CD4-positive, alpha-beta T cell (primary cell): ENCODE measurements at regions of chr19 and their contacts with region 1.

Region 1: GRCh38 chr19:58519355-58520256 is at the start of gene ZBTB45:
- DNase-seq: peak; percentile 77 to 96 (median 84)
- ATAC-seq: peak; percentile 78
- H3K4me3 ChIP-seq: peak within 1 kb of the TSS; percentile 86
- H3K4me3 Mint-ChIP-seq: peak within 1 kb of the TSS; percentile 99
- H3K27ac ChIP-seq: peak within 1 kb of the TSS; percentile 87 to 95
- H3K27ac Mint-ChIP-seq: peak within 1 kb of the TSS; percentile 98
- H3K4me1 ChIP-seq: peaks cover 51% of the 10 kb centered on the region
- H3K4me1 Mint-ChIP-seq: peaks cover 43% of the 10 kb centered on the region
- H3K27me3 ChIP-seq: no peaks in the 10 kb centered on the region
- H3K27me3 Mint-ChIP-seq: no peaks in the 10 kb centered on the region
- CTCF ChIP-seq: peak; percentile 82
- total RNA-seq, gene ZBTB45: 5.7 to 6.3 TPM

Region 2: DNA sequence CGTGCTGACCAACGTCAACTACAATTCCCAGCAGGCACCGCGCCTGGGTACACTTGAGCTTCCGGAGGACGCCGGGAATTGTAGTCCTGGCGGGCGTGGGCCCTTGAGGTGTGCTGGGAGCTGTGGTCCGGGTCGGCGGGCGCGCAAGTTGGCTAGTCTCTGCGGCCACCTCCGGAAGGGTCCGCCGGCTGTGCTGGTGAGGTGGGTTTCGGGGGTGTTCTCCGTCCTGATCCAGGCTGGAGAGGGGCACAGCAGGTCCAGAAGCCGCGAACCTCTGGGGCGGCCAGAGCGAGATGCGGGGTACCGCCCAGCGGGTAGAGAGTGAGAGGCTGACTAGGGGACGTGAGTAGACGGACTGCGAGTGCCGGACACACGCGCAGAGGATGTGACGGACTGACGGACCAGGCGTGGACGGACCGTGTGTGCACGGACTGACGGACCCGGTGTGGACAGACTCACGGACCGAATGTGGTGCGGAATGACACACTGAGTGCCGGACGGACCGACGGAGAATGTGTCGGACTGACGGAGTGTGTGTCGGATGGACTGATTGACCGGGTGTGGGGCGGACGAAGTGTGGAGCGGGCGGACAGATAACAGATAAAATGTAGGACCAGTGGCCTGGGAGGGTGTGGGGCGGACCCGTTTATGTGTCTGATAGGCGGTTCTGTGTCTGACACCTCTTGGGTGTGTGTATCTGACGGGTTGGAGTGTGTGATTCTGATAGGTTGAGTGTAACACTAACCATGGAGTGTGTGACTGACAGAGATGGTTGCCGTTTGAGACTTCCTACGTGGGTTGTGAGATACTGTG is 192.5 kb before region 1 on chr19 and contains the start of gene ZSCAN22:
- CTCF ChIA-PET with region 1: interaction called, 4 read pairs
- POLR2A ChIA-PET with region 1: interaction called, 3 read pairs
- intact Hi-C with region 1: loop called in 1 of 2 experiments (anchors 5 kb)
- DNase-seq: peak; percentile 76 to 94 (median 86)
- ATAC-seq: peak; percentile 88
- H3K4me3 ChIP-seq: peak within 1 kb of the TSS; percentile 86
- H3K4me3 Mint-ChIP-seq: no peak within 1 kb of the TSS
- H3K27ac ChIP-seq: peak within 1 kb of the TSS; percentile 65
- H3K27ac Mint-ChIP-seq: no peak within 1 kb of the TSS
- H3K4me1 ChIP-seq: peaks cover 22% of the 10 kb centered on the region
- H3K4me1 Mint-ChIP-seq: peaks cover 4% of the 10 kb centered on the region
- H3K27me3 ChIP-seq: no peaks in the 10 kb centered on the region
- H3K27me3 Mint-ChIP-seq: no peaks in the 10 kb centered on the region
- CTCF ChIP-seq: no peak
- total RNA-seq, gene ZSCAN22: 0.77 to 0.81 TPM

Region 3: DNA sequence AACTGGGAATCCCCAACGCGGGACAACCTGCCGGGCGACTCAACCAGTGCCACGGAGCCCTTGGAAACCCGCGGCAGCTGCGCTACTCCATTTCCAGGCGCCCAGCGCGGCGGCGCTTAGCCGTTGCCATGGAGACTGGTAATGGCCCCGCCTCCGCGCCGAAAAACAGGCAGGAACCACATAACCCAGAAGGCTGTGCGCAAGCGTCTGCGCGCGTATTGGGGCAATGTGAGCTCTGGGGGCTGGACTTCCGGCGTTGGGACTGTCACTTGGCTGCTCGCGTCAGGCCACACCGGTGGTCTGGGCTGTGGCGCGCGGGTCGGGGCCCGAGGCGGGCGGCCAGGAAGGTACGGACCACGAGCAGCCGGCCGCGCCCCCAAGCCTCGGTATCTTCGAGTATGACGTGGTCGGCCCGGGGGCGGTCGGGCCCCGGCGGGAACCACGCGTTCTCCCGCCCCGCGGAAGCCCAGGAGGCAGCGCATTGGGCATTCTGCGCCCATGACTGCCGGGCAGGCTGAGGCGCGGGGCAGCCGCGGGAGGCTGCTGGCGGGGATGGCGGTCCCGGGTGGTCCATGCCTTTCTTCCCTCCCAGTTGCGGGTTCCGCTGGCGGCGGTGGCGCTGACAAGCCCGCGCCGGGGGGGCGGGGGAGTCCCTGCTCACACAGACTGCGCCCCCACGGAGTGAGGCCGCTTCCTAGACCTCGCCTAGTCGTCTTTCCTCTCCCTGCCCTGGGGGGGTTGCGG is 68.1 kb before region 1 on chr19 and contains the start of gene ZNF324B:
- CTCF ChIA-PET with region 1: interaction called, 10 read pairs
- POLR2A ChIA-PET with region 1: no interaction called
- intact Hi-C with region 1: no loop called
- DNase-seq: peak; percentile 92 to 98 (median 96)
- ATAC-seq: peak; percentile 97
- H3K4me3 ChIP-seq: peak within 1 kb of the TSS; percentile 66
- H3K4me3 Mint-ChIP-seq: peak within 1 kb of the TSS; percentile 85
- H3K27ac ChIP-seq: peak within 1 kb of the TSS in 1 of 2 donors; percentile 61
- H3K27ac Mint-ChIP-seq: peak within 1 kb of the TSS; percentile 63
- H3K4me1 ChIP-seq: peaks cover 15% of the 10 kb centered on the region
- H3K4me1 Mint-ChIP-seq: peaks cover 21% of the 10 kb centered on the region
- H3K27me3 ChIP-seq: peaks cover 9 to 16% of the 10 kb centered on the region in 2 experiments
- H3K27me3 Mint-ChIP-seq: peaks cover 28% of the 10 kb centered on the region
- CTCF ChIP-seq: no peak
- total RNA-seq, gene ZNF324B: 6.3 to 7.6 TPM

Region 4: DNA sequence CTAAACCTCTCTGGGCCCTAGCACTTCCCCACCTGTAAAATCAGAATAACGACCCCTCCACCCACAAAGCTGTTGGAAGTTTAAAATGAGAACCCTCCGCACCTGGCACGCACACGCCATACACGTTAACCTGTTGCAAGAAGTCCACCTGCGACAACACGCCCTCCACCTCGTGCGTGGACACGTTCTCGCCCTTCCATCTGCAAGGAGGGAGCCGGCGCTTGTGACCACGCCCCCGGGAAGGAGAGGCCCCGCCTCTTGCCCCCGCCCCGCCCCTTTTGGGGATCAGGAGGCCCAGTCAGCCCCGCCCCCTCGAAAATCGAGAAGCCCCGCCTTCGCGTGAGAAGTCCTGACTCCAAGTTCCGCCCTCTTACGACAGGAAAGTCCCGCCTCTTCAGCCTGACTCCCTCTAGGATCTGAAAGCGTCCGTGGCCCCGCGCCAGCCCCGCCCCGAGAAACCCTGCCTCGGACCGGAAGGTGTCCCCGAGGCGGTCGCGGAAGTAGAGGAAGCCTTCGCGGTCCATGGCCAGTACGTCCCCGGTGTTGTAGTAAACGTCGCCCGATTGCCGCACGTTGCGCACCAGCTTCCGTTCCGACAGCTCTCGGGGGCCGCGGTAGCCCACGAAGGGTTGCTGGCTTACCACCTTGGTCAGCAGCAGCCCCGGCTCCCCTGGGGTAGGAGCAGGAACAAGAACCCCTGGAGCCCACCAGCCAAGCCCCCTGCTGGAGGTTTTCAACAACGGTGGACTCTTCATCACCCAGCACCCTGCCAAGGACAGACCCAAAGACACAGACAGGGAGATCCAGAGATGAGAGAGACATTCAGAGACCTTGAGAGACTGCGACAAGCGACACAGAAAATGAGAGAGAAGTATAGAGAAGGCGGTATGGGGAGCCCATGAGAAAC is 20.3 kb before region 1 on chr19:
- CTCF ChIA-PET with region 1: interaction called, 8 read pairs
- POLR2A ChIA-PET with region 1: interaction called, 15 read pairs
- intact Hi-C with region 1: no loop called
- DNase-seq: peak; percentile 85 to 98 (median 92)
- ATAC-seq: peak; percentile 83
- H3K4me3 ChIP-seq: peak overlapping the region; percentile 57
- H3K4me3 Mint-ChIP-seq: peak overlapping the region; percentile 94
- H3K27ac ChIP-seq: peak overlapping the region; percentile 57 to 79
- H3K27ac Mint-ChIP-seq: peak overlapping the region; percentile 86
- H3K4me1 ChIP-seq: peaks cover 25% of the 10 kb centered on the region
- H3K4me1 Mint-ChIP-seq: peaks cover 16% of the 10 kb centered on the region
- H3K27me3 ChIP-seq: no peaks in the 10 kb centered on the region
- H3K27me3 Mint-ChIP-seq: no peaks in the 10 kb centered on the region
- CTCF ChIP-seq: no peak

Region 5: GRCh38 chr19:58543826-58544590 is 24.4 kb after region 1 on chr19 and contains the start of gene TRIM28:
- CTCF ChIA-PET with region 1: interaction called, 34 read pairs
- POLR2A ChIA-PET with region 1: interaction called, 56 read pairs
- intact Hi-C with region 1: loop called (anchors 1 kb)
- DNase-seq: peak; percentile 99 to 100 (median 100)
- ATAC-seq: peak; percentile 87
- H3K4me3 ChIP-seq: peak within 1 kb of the TSS; percentile 70
- H3K4me3 Mint-ChIP-seq: peak within 1 kb of the TSS; percentile 95
- H3K27ac ChIP-seq: peak within 1 kb of the TSS; percentile 79 to 88
- H3K27ac Mint-ChIP-seq: peak within 1 kb of the TSS; percentile 95
- H3K4me1 ChIP-seq: peaks cover 41% of the 10 kb centered on the region
- H3K4me1 Mint-ChIP-seq: peaks cover 40% of the 10 kb centered on the region
- H3K27me3 ChIP-seq: no peaks in the 10 kb centered on the region
- H3K27me3 Mint-ChIP-seq: no peaks in the 10 kb centered on the region
- CTCF ChIP-seq: no peak
- total RNA-seq, gene TRIM28: 549 to 553 TPM

Region 6: DNA sequence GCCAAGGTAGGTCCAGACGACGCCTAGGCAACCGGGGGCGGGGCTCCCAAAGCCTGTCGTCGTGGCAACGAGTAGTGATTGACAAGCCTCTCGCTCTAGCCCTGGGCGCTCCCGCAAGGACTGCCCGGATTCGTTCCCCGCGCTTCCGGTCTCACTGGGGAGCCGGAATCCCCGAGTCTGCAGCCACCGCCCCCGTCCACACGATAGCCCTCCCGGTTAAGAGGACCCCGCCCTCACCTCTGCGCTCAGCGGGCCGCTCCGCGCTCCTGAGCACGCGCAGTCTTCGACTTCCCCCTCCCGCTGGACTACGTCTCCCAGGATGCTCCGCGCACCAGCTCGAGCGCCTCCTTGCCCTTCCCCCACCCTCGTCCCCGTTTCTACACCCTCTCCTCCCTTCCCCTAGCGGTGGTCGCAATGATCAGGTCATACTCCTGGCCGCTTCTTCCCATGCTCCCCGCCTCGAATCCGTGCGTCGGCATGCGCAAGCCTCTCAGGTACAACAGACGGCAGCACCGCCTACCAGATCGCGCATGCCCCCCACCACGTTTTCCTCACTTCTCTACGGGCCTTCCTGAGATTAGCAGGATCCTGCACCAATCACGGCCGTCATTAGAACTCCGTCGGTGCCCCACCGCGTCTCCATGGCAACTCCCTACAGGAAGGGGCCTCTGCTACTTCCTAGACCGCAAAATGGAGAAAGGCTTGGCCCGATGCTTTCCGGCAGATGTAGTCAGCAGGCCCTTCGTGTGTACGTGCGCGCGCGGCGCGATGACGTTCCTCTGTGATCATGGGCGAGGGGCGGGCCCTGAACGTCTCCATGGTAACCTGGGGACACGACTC is 53.4 kb after region 1 on chr19 and contains the start of gene MZF1:
- CTCF ChIA-PET with region 1: interaction called, 22 read pairs
- POLR2A ChIA-PET with region 1: interaction called, 27 read pairs
- intact Hi-C with region 1: loop called (anchors 2 kb)
- DNase-seq: peak; percentile 98 to 100 (median 100)
- ATAC-seq: peak; percentile 72
- H3K4me3 ChIP-seq: peak within 1 kb of the TSS; percentile 84
- H3K4me3 Mint-ChIP-seq: peak within 1 kb of the TSS; percentile 92
- H3K27ac ChIP-seq: peak within 1 kb of the TSS; percentile 100
- H3K27ac Mint-ChIP-seq: peak within 1 kb of the TSS; percentile 96
- H3K4me1 ChIP-seq: peaks cover 49% of the 10 kb centered on the region
- H3K4me1 Mint-ChIP-seq: peaks cover 36% of the 10 kb centered on the region
- H3K27me3 ChIP-seq: no peaks in the 10 kb centered on the region
- H3K27me3 Mint-ChIP-seq: no peaks in the 10 kb centered on the region
- CTCF ChIP-seq: no peak
- total RNA-seq, gene MZF1: 21.0 to 21.1 TPM